Activated CD4-positive, alpha-beta T cell treated with anti-CD3 and anti-CD28 coated beads for 36 hours (primary cell): ENCODE measurements at regions of chr6 and their contacts with region 1.

Region 1: DNA sequence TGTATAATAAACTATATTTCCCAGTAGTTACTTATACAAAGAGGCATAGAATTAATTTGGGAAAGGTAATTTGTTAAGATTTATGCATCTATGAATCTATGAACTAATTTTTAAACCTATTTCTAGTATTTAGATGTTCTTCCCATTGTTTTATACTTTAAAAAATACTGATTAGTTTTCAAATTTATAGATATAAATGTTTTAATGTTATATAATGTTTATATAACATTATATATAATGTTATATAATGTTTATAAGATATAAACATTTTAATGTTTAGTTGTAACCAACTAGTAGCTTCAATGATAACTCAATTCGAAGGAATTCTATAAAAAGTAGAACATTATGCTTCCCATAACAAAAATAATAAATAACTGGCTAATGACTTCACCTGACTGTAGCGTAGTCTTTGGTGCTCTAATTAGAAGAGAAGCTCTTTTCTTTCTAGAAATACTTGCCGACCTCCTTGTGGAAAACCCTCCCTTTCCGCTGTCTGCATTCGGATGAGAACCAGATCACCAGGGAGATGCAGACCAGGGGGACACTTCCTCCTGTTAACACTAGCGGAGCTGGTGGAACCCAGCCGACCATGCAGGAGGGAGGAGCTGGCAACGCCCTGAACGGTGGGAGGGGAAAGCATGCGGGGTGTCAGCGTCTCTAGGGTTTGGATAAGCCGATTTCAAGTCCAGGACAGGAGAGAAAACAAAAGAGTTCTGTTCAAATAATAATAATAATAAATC is 158.4 kb downstream of the OR2B2 start:
- DNase-seq: peak; percentile 89
- ATAC-seq: peak; percentile 70
- H3K4me3 Mint-ChIP-seq: peak overlapping the region; percentile 98
- H3K27ac Mint-ChIP-seq: peak overlapping the region; percentile 81
- H3K4me1 Mint-ChIP-seq: peaks cover 31% of the 10 kb centered on the region
- H3K27me3 Mint-ChIP-seq: peaks cover 3% of the 10 kb centered on the region

Region 2: DNA sequence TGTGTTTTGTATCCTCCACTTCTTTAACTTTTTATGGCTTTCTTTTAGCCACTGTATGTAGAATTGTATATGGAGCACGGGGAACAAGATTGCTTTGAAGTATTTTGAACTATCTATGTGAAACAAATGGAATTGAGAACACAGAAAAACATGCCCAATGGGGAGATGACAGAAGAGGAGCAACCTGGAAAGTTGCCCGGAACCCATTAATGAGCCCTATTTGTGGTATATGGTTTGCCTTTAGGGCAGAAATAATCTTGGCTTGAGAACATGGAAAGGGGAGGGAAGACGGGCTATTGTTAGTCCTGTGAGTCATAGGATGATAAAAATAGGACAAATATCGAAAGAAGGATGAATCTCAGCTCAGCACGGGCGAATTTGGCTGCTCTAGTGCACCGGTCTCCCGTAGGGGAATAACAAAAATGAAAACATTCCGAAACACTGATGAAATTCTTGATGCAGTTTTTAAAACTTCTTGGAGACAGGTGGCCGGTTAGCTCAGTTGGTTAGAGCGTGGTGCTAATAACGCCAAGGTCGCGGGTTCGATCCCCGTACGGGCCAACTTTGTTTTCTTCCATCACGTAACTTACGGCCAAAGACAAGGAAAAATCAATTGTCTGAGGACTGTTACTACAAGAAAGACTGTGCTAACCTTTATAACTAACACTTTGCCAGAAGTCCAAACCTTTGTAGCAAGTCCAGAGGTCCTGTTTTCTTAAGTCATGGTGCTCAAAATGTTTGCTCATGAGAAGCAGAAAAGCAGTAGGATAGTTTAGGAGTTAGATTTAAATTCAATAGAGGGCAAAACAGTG is 1200.0 kb before region 1 on chr6:
- CTCF ChIA-PET with region 1: no interaction called
- POLR2A ChIA-PET with region 1: no interaction called
- intact Hi-C with region 1: loop called in 1 of 2 experiments (anchors 5 kb)
- DNase-seq: peak; percentile 89
- ATAC-seq: peak; percentile 58
- H3K4me3 Mint-ChIP-seq: no peak overlapping the region
- H3K27ac Mint-ChIP-seq: no peak overlapping the region
- H3K4me1 Mint-ChIP-seq: peaks cover 27% of the 10 kb centered on the region
- H3K27me3 Mint-ChIP-seq: no peaks in the 10 kb centered on the region

Region 3: GRCh38 chr6:27312146-27312949 is 441.5 kb before region 1 on chr6 and contains the start of gene POM121L2:
- CTCF ChIA-PET with region 1: interaction called, 3 read pairs
- POLR2A ChIA-PET with region 1: no interaction called
- intact Hi-C with region 1: loop called in 1 of 2 experiments (anchors 1 kb)
- DNase-seq: peak; percentile 77
- ATAC-seq: peak; percentile 69
- H3K4me3 Mint-ChIP-seq: peak within 1 kb of the TSS; percentile 71
- H3K27ac Mint-ChIP-seq: no peak within 1 kb of the TSS
- H3K4me1 Mint-ChIP-seq: peaks cover 4% of the 10 kb centered on the region
- H3K27me3 Mint-ChIP-seq: peaks cover 57% of the 10 kb centered on the region
- total RNA-seq, gene POM121L2: not detected

Region 4: DNA sequence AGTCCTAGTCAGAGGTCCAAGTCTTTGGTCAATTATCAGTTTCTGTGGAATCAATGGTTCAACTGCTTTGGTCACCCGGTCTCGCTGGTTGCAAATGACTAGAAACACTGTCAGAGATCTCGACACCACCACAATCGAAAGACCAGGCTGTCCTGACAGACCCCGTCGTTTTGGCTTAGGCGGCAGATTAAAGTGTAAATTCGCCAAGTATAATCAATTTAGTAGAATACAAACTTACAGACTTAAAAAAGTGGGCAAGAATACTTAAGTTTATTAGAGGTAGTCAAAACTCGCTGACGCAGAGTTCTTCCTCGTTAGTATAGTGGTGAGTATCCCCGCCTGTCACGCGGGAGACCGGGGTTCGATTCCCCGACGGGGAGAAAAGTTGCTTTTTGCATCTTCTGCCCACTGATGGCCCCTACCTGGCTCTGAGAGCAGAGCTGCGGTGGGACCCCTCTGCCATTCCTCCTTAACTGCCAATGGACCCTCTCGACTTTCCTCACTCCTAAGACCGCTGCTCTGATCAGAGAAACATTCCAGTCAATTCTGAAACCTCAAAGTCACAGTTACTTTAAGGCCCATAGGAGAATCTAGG is 250.3 kb before region 1 on chr6:
- CTCF ChIA-PET with region 1: interaction called, 3 read pairs
- POLR2A ChIA-PET with region 1: no interaction called
- intact Hi-C with region 1: loop called (anchors 1 to 2 kb)
- DNase-seq: peak; percentile 87
- ATAC-seq: peak; percentile 40
- H3K4me3 Mint-ChIP-seq: peak overlapping the region; percentile 88
- H3K27ac Mint-ChIP-seq: peak overlapping the region; percentile 83
- H3K4me1 Mint-ChIP-seq: peaks cover 26% of the 10 kb centered on the region
- H3K27me3 Mint-ChIP-seq: peaks cover 4% of the 10 kb centered on the region

Region 5: GRCh38 chr6:27687154-27688013 is 66.5 kb before region 1 on chr6:
- CTCF ChIA-PET with region 1: interaction called, 12 read pairs
- POLR2A ChIA-PET with region 1: no interaction called
- intact Hi-C with region 1: loop called (anchors 1 to 2 kb)
- DNase-seq: peak; percentile 91
- ATAC-seq: peak; percentile 81
- H3K4me3 Mint-ChIP-seq: peak overlapping the region; percentile 87
- H3K27ac Mint-ChIP-seq: peak overlapping the region; percentile 84
- H3K4me1 Mint-ChIP-seq: peaks cover 20% of the 10 kb centered on the region
- H3K27me3 Mint-ChIP-seq: peaks cover 9% of the 10 kb centered on the region

Region 6: DNA sequence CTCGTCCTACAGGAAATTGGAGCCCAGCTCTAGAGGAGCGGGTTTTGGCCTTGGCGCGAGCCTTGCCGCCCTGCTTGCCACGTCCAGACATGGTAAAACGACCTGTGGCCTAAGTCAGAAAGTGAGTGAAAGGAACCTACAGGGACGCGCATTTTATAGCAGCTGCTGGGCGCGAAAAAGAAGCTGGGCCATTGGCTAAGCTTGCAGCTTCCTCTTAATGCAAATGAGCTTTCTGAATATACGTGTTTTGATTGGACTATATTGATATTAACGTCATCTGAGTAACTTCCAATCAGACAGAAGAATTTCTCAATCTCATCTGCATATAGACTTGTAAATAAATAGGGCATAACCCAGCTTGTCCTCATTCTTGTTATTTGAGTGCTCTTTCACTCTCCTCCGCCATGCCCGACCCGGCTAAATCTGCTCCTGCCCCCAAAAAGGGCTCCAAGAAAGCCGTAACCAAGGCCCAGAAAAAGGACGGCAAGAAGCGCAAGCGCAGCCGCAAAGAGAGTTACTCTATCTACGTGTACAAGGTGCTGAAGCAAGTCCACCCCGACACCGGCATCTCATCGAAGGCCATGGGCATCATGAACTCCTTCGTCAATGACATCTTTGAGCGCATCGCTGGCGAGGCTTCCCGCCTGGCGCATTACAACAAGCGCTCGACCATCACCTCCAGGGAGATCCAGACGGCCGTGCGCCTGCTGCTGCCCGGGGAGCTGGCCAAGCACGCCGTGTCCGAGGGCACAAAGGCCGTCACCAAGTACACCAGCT is 139.4 kb after region 1 on chr6:
- CTCF ChIA-PET with region 1: no interaction called
- POLR2A ChIA-PET with region 1: no interaction called
- intact Hi-C with region 1: loop called (anchors 2 to 5 kb)
- DNase-seq: peak; percentile 94
- ATAC-seq: peak; percentile 64
- H3K4me3 Mint-ChIP-seq: no peak overlapping the region
- H3K27ac Mint-ChIP-seq: no peak overlapping the region
- H3K4me1 Mint-ChIP-seq: peaks cover 31% of the 10 kb centered on the region
- H3K27me3 Mint-ChIP-seq: no peaks in the 10 kb centered on the region